ENCODE measurements at regions of chr7 and their contacts with region 1.

Region 1: DNA sequence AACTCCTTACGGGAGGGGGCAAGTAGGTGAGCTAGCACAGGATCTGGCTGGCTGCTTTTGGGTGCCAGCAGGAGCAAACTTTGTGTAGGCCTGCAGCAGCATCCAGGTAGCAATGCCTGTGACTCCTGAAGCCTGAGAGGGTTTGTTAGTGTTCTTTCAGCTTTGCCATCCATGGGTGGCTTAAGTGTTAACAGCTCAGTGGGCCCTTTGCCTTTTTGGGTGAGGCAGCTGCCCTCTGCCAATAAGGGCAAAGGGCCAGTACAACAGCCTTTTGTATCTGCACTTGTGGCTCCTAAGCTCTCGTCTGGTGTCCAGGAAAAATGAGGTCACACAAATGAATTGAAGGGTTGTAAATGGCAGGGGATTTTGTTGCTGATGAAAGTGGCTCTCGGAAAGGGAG is 359.0 kb upstream of the CHRM2 start:
- DNase-seq: no peak
- ATAC-seq: peak; percentile 86

Region 2: GRCh38 chr7:136146925-136147324 is 362.5 kb before region 1 on chr7:
- intact Hi-C with region 1: loop called (anchors 5 kb)
- DNase-seq: no peak
- ATAC-seq: no peak

Measured in left ventricle myocardium superior (tissue), 1 donor.